B cell (primary cell): ENCODE measurements at regions of chr19 and their contacts with region 1.

Region 1: DNA sequence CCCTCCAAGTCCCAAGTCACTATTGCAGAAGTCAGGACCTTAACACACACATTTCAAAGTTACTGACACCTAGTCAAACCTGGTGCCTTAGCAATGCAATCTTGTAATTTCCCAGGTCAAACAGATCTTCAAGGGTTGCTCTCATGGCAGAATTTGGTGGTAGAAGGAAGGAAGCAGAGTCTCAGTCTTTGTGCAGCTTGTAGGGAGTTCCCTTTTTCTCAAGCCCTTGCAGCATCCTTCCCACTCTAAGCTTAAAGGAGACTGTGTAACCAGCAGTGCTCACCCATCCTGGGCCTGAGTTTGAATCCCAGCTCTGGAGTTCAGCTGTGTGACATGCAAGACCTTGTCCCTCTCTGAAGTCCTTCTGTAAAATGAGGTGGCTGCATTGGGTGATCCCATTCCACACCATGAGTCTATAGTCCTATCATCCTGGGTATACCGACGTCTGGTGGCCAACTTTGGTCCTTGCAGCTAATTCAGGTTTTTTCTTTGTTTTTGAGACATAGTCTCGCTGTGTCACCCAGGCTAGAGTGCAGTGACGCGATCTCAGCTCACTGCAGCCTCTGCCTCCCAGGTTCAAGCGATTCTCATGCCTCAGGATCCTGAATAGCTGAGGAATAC is 9.8 kb downstream of the SIGLEC10 start:
- DNase-seq: peak; percentile 60
- ATAC-seq: peak; percentile 76
- H3K4me3 ChIP-seq: no peak overlapping the region
- H3K4me3 Mint-ChIP-seq: no peak overlapping the region
- H3K27ac ChIP-seq: peak overlapping the region in 1 of 2 donors; percentile 48
- H3K27ac Mint-ChIP-seq: no peak overlapping the region
- H3K4me1 ChIP-seq: peaks cover 22 to 30% of the 10 kb centered on the region in 2 donors
- H3K4me1 Mint-ChIP-seq: peaks cover 20% of the 10 kb centered on the region
- H3K27me3 ChIP-seq: no peaks in the 10 kb centered on the region
- H3K27me3 Mint-ChIP-seq: no peaks in the 10 kb centered on the region
- CTCF ChIP-seq: peak; percentile 63

Region 2: DNA sequence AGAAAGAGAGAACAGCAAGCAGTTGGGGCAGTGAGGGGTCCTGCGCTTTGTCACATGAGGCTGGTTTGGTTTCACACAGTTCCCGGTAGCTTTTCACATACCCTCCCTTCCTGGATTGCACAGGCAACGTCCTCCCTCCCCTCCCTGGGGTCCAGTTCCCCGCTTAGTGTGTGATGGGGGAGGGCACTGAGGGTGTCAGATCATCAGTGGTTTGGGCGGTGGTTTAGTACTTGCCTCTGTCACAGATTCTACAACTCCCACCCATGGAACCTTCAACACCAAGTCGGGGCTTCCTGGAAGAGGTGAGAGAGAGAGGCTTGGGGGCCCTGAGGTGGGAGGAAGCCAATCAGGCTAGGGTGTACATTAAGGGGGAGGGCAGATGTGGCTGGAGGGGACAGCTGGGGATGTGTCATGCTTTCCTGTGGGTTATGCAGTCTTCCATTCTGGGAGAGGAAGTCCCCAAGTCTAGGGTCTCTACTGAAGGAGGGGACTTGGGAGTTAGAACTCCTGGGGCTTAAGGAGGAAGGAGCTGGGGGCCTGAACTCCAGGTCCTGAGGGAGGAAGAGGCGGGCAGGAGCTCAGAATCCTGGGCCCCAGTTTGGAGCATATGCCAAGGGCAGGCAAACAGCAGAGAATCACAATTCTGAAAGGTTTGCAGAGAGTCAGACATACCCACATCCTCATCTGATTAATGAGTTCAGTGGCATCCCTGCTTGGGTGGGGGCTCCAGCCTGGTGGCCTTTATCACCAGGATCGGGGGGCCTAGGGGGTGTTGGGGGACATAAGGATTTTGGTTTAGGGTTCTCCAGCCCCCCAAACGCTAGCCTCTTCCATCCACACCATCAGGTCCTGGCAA is 34.7 kb before region 1 on chr19 and contains the start of gene NKG7:
- CTCF ChIA-PET with region 1: no interaction called
- POLR2A ChIA-PET with region 1: no interaction called
- intact Hi-C with region 1: no loop called
- DNase-seq: no peak
- ATAC-seq: no peak
- H3K4me3 ChIP-seq: no peak within 1 kb of the TSS
- H3K4me3 Mint-ChIP-seq: no peak within 1 kb of the TSS
- H3K27ac ChIP-seq: no peak within 1 kb of the TSS
- H3K27ac Mint-ChIP-seq: peak within 1 kb of the TSS; percentile 46
- H3K4me1 ChIP-seq: peaks cover 0 to 17% of the 10 kb centered on the region in 2 donors
- H3K4me1 Mint-ChIP-seq: peaks cover 9% of the 10 kb centered on the region
- H3K27me3 ChIP-seq: no peaks in the 10 kb centered on the region
- H3K27me3 Mint-ChIP-seq: no peaks in the 10 kb centered on the region
- CTCF ChIP-seq: no peak
- total RNA-seq, gene NKG7: 1.9 and 2.6 TPM in 2 replicates

Region 3: GRCh38 chr19:51393959-51394836 is 13.4 kb before region 1 on chr19:
- CTCF ChIA-PET with region 1: interaction called, 38 read pairs
- POLR2A ChIA-PET with region 1: no interaction called
- intact Hi-C with region 1: no loop called
- DNase-seq: peak; percentile 95
- ATAC-seq: peak; percentile 92
- H3K4me3 ChIP-seq: peak overlapping the region; percentile 43 to 74 (median 62)
- H3K4me3 Mint-ChIP-seq: peak overlapping the region; percentile 85
- H3K27ac ChIP-seq: peak overlapping the region; percentile 63 to 73
- H3K27ac Mint-ChIP-seq: peak overlapping the region; percentile 78
- H3K4me1 ChIP-seq: peaks cover 22 to 33% of the 10 kb centered on the region in 2 donors
- H3K4me1 Mint-ChIP-seq: peaks cover 30% of the 10 kb centered on the region
- H3K27me3 ChIP-seq: peaks cover 0 to 4% (median 0%) of the 10 kb centered on the region in 4 experiments
- H3K27me3 Mint-ChIP-seq: no peaks in the 10 kb centered on the region
- CTCF ChIP-seq: peak; percentile 13

Region 4: GRCh38 chr19:51441410-51442390 is 34.1 kb after region 1 on chr19:
- CTCF ChIA-PET with region 1: interaction called, 12 read pairs
- POLR2A ChIA-PET with region 1: no interaction called
- intact Hi-C with region 1: no loop called
- DNase-seq: peak; percentile 88
- ATAC-seq: peak; percentile 89
- H3K4me3 ChIP-seq: peak overlapping the region; percentile 5 to 41 (median 37)
- H3K4me3 Mint-ChIP-seq: peak overlapping the region; percentile 71
- H3K27ac ChIP-seq: peak overlapping the region; percentile 61 to 71
- H3K27ac Mint-ChIP-seq: peak overlapping the region; percentile 83
- H3K4me1 ChIP-seq: peaks cover 20 to 32% of the 10 kb centered on the region in 2 donors
- H3K4me1 Mint-ChIP-seq: peaks cover 32% of the 10 kb centered on the region
- H3K27me3 ChIP-seq: peaks cover 0 to 15% (median 3%) of the 10 kb centered on the region in 4 experiments
- H3K27me3 Mint-ChIP-seq: peaks cover 20% of the 10 kb centered on the region
- CTCF ChIP-seq: peak; percentile 22

Region 5: GRCh38 chr19:51485960-51486660 is 78.5 kb after region 1 on chr19:
- CTCF ChIA-PET with region 1: no interaction called
- POLR2A ChIA-PET with region 1: no interaction called
- intact Hi-C with region 1: no loop called
- DNase-seq: no peak
- ATAC-seq: no peak
- H3K4me3 ChIP-seq: no peak overlapping the region
- H3K4me3 Mint-ChIP-seq: no peak overlapping the region
- H3K27ac ChIP-seq: no peak overlapping the region
- H3K27ac Mint-ChIP-seq: no peak overlapping the region
- H3K4me1 ChIP-seq: no peaks in the 10 kb centered on the region
- H3K4me1 Mint-ChIP-seq: no peaks in the 10 kb centered on the region
- H3K27me3 ChIP-seq: peaks cover 0 to 12% (median 6%) of the 10 kb centered on the region in 4 experiments
- H3K27me3 Mint-ChIP-seq: peaks cover 34% of the 10 kb centered on the region
- CTCF ChIP-seq: no peak